ENCODE measurements at regions of chr5 and their contacts with region 1.

Region 1: GRCh38 chr5:32489791-32490582 is 45.4 kb upstream of the ZFR start:
- DNase-seq: peak; percentile 69
- CTCF ChIP-seq: peak; percentile 64

Region 2: GRCh38 chr5:32475334-32476097 is 14.5 kb before region 1 on chr5:
- CTCF ChIA-PET with region 1: interaction called, 27 read pairs
- POLR2A ChIA-PET with region 1: no interaction called
- DNase-seq: no peak
- CTCF ChIP-seq: no peak

Region 3: DNA sequence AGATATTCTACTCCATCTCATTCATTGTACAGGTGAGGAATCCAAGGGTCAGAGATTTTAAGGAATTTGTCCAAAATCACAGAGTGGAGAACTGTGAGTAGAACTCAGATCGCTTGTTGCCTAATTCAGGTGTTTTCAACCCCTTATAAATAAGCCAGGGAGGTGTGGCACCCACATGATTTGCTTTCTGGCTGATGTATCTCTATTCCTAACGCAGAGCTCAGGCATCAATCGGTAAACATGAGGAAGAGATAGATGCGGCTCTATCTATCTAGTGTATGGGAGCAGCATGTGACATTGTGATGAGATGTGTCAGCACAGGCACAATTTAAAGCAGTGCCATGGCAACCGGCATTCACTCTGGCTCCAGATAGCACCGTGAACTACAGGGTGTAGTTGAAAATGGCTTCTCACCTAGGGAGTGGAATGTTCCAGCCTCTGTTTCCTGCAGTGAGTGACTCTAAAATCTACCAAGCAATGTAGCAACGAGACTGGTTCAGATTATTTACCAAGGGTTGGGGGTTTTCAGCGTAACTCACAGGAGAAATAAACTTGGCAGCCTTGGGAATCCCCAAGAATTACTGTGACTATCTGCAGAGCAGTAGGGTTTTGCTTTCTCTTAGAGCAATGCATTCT is 42.0 kb after region 1 on chr5:
- CTCF ChIA-PET with region 1: interaction called, 17 read pairs
- POLR2A ChIA-PET with region 1: no interaction called
- DNase-seq: peak; percentile 31
- CTCF ChIP-seq: no peak

Region 4: GRCh38 chr5:32613050-32613672 is 123.2 kb after region 1 on chr5:
- CTCF ChIA-PET with region 1: interaction called, 73 read pairs
- POLR2A ChIA-PET with region 1: no interaction called
- DNase-seq: peak; percentile 81
- CTCF ChIP-seq: peak; percentile 81

Measured in GM10248 (cell line).